Activated naive CD4-positive, alpha-beta T cell treated with anti-CD3 and anti-CD28 coated beads for 36 hours (primary cell): ENCODE measurements at regions of chr2 and their contacts with region 1.

Region 1: DNA sequence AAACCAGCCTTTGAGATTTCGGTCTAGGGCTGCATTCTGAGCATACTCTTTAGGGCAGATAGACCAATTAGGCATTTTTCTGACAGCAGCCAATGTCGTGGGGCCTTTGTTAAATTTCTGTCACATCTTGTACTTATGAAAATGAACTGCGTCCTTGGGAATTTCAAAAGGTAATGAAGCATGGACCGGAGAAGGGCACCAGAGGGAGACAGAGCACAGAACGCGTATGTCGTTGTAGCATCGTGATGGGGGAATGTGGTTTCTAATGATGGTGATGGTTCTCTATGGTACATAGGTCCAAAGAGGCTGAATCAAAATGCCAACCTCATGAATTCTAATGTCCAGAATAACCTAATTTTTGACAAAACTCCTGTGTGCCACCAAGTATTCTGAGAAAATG is 483.9 kb upstream of the CRIM1 start:
- DNase-seq: no peak
- H3K4me3 Mint-ChIP-seq: no peak overlapping the region
- H3K27ac Mint-ChIP-seq: no peak overlapping the region
- H3K4me1 Mint-ChIP-seq: no peaks in the 10 kb centered on the region
- H3K27me3 Mint-ChIP-seq: peaks cover 7% of the 10 kb centered on the region

Region 2: GRCh38 chr2:35731674-35732073 is 140.0 kb before region 1 on chr2:
- CTCF ChIA-PET with region 1: no interaction called
- intact Hi-C with region 1: no loop called
- DNase-seq: no peak
- H3K4me3 Mint-ChIP-seq: no peak overlapping the region
- H3K27ac Mint-ChIP-seq: no peak overlapping the region
- H3K4me1 Mint-ChIP-seq: no peaks in the 10 kb centered on the region
- H3K27me3 Mint-ChIP-seq: peaks cover 6% of the 10 kb centered on the region

Region 3: DNA sequence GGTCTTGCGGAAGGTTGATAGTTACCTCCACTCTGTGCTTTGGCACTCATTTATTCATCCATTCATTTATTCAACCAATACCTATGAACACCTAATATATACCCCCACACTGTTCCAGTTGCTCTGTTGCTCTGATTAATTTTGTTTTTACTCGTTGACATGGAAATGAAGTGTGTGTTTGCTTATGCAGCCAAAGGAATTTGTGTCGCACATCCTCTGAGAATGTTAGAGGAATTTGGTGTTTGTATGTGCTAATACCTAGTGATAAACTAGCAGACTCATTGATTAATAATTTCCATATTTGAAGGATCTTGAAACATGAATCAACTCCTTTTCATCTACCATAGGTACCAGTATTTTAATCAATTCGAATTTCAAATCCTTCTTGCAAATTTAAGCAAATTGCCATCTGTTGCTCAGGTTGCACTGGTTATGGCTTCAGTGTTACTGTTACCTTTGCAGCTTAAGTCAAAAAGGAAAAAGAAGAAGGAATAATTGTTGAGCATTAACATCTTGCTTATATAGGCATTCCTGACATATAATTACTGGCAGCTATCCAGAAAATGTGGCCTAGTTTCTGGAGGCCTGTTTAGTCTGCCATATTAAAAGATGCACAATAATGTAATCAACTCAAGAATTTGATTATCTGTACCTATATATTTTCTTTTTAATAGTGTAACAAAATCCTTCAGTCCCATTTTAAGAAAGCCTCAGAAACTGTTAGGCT is 458.2 kb after region 1 on chr2:
- CTCF ChIA-PET with region 1: no interaction called
- intact Hi-C with region 1: loop called (anchors 5 kb)
- DNase-seq: no peak
- H3K4me3 Mint-ChIP-seq: no peak overlapping the region
- H3K27ac Mint-ChIP-seq: no peak overlapping the region
- H3K4me1 Mint-ChIP-seq: peaks cover 2% of the 10 kb centered on the region
- H3K27me3 Mint-ChIP-seq: no peaks in the 10 kb centered on the region

Region 4: DNA sequence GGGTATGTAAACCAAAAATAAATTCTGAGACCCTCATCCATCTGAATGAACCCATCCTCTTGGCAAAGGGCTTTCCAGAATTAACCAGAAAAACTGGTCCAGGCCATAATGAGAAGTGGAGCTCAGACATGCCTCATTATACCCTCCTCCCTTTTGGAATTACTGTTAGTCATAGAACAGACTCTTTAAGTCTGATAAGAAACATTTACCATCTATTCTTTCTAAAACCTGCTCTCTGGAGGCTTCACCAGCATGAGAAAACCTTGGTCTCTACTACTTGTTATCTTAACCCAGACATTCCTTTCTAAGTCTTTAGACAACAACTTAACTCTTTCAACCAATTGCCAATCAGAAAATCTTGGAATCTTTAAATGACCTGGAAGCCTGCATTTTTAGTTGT is 1555.6 kb after region 1 on chr2:
- CTCF ChIA-PET with region 1: no interaction called
- intact Hi-C with region 1: no loop called
- DNase-seq: no peak
- H3K4me3 Mint-ChIP-seq: no peak overlapping the region
- H3K27ac Mint-ChIP-seq: no peak overlapping the region
- H3K4me1 Mint-ChIP-seq: no peaks in the 10 kb centered on the region
- H3K27me3 Mint-ChIP-seq: no peaks in the 10 kb centered on the region